ENCODE measurements at regions of chr10 and their contacts with region 1.

Region 1: GRCh38 chr10:103712570-103713498 is 142.5 kb downstream of the SH3PXD2A start:
- DNase-seq: peak; percentile 74 to 84
- ATAC-seq: peak; percentile 62 to 87 (median 80)
- H3K4me3 ChIP-seq: no peak overlapping the region
- H3K27ac ChIP-seq: no peak overlapping the region
- H3K4me1 ChIP-seq: peaks cover 0 to 25% (median 9%) of the 10 kb centered on the region in 9 donors
- H3K27me3 ChIP-seq: no peaks in the 10 kb centered on the region
- CTCF ChIP-seq: peak; percentile 80 to 96 (median 90)

Region 2: DNA sequence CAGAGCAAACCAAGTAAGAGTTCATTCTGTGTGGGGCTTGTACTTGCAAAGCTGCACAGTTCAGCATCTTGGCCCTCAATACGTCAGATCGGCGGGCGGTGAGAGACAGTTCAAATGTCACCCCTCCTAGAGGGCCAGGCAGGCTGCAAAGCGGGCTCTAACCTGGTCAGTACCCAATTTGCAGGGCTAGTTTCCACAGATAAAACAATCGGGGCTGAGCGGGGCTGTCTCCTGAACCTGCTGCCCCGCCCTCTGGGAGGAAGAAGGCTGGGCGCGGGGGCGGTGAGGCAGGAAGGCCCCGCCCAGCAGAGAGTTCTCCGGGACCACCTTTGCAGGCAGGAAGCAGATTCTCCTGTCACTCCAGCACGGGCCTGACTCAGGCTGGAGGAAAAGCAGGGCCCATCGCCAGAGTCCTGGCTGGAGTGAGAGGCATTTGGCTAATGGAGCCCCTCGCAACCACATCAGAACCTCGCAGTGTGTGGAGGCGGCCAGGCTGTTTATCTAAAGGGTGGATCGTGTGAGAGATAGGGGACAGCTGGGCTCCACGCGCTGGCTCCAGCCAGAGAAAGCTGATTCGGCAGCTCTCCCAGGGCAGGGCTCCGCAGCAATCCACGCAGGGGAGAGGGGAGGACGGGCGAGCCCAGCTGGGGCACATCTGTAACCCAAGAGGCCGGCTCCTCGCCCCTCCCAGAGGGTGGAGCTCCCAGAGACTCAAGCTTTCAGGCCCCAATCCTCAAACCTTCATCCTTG is 59.4 kb after region 1 on chr10:
- intact Hi-C with region 1: loop called in 1 of 10 experiments (anchors 10 kb)
- DNase-seq: peak; percentile 87
- ATAC-seq: peak; percentile 84 to 90 (median 88)
- H3K4me3 ChIP-seq: peak overlapping the region in 8 of 10 donors; percentile 9 to 54 (median 42)
- H3K27ac ChIP-seq: peak overlapping the region; percentile 59 to 89 (median 78)
- H3K4me1 ChIP-seq: peaks cover 6 to 38% (median 33%) of the 10 kb centered on the region in 9 donors
- H3K27me3 ChIP-seq: no peaks in the 10 kb centered on the region
- CTCF ChIP-seq: no peak

Region 3: GRCh38 chr10:104209575-104210198 is 496.9 kb after region 1 on chr10:
- intact Hi-C with region 1: loop called in 1 of 10 experiments (anchors 10 kb)
- DNase-seq: peak in 1 of 2 donors; percentile 35
- ATAC-seq: peak in 5 of 8 donors; percentile 47 to 77 (median 61)
- H3K4me3 ChIP-seq: no peak overlapping the region
- H3K27ac ChIP-seq: no peak overlapping the region
- H3K4me1 ChIP-seq: peaks cover 0 to 7% (median 0%) of the 10 kb centered on the region in 9 donors
- H3K27me3 ChIP-seq: peaks cover 0 to 3% (median 0%) of the 10 kb centered on the region in 7 donors
- CTCF ChIP-seq: peak in 8 of 9 donors; percentile 14 to 71 (median 66)

Measured in heart right ventricle (tissue), 16 donors.